Endothelial cell of umbilical vein (primary cell): ENCODE measurements at regions of chr3 and their contacts with region 1.

Region 1: GRCh38 chr3:182713743-182714517 is 79.4 kb upstream of the ATP11B start:
- DNase-seq: peak; percentile 75
- H3K4me3 ChIP-seq: no peak overlapping the region
- H3K27ac ChIP-seq: no peak overlapping the region
- H3K4me1 ChIP-seq: peaks cover 5% of the 10 kb centered on the region
- H3K27me3 ChIP-seq: no peaks in the 10 kb centered on the region
- CTCF ChIP-seq: peak; percentile 40 to 53
- POLR2A ChIP-seq: no peak

Region 2: DNA sequence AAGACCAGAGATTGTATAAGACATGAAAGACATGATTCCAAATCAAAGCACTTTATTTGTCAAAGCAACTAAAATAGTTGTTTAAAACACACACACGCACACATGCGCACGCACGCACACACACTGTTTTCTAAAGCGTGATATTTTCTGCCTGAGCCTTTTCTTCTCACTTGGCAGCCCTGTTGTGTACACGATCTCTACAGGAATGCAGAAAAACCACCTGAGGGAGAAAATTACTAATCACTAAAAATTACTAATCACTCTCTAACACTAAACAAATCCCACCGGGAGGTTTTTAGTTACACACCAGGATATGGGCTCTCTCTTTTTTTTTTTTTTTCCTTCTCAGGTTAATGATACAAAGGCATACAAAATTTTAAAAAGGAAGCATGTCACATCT is 80.7 kb before region 1 on chr3:
- CTCF ChIA-PET with region 1: no interaction called
- POLR2A ChIA-PET with region 1: no interaction called
- dilution Hi-C with region 1: no loop called
- intact Hi-C with region 1: no loop called
- DNase-seq: no peak
- H3K4me3 ChIP-seq: no peak overlapping the region
- H3K27ac ChIP-seq: no peak overlapping the region
- H3K4me1 ChIP-seq: no peaks in the 10 kb centered on the region
- H3K27me3 ChIP-seq: peaks cover 0 to 2% of the 10 kb centered on the region in 2 experiments
- CTCF ChIP-seq: no peak
- POLR2A ChIP-seq: no peak

Region 3: GRCh38 chr3:182792901-182793662 is 79.2 kb after region 1 on chr3 and contains the start of gene ATP11B:
- CTCF ChIA-PET with region 1: interaction called, 47 read pairs
- POLR2A ChIA-PET with region 1: no interaction called
- dilution Hi-C with region 1: no loop called
- intact Hi-C with region 1: loop called (anchors 1 kb)
- DNase-seq: peak; percentile 79
- H3K4me3 ChIP-seq: peak within 1 kb of the TSS; percentile 69 to 90 (median 74)
- H3K27ac ChIP-seq: peak within 1 kb of the TSS; percentile 74
- H3K4me1 ChIP-seq: peaks cover 32% of the 10 kb centered on the region
- H3K27me3 ChIP-seq: no peaks in the 10 kb centered on the region
- CTCF ChIP-seq: no peak
- POLR2A ChIP-seq: peak; percentile 80
- total RNA-seq, gene ATP11B: 49.3 and 62.3 TPM in 2 replicates

Region 4: GRCh38 chr3:182843478-182843877 is 129.5 kb after region 1 on chr3:
- CTCF ChIA-PET with region 1: interaction called, 23 read pairs
- POLR2A ChIA-PET with region 1: no interaction called
- dilution Hi-C with region 1: no loop called
- intact Hi-C with region 1: loop called (anchors 1 kb)
- DNase-seq: peak; percentile 18
- H3K4me3 ChIP-seq: no peak overlapping the region
- H3K27ac ChIP-seq: no peak overlapping the region
- H3K4me1 ChIP-seq: peaks cover 9% of the 10 kb centered on the region
- H3K27me3 ChIP-seq: no peaks in the 10 kb centered on the region
- CTCF ChIP-seq: no peak
- POLR2A ChIP-seq: no peak

Region 5: GRCh38 chr3:182869059-182869458 is 155.1 kb after region 1 on chr3:
- CTCF ChIA-PET with region 1: interaction called, 14 read pairs
- POLR2A ChIA-PET with region 1: no interaction called
- dilution Hi-C with region 1: no loop called
- intact Hi-C with region 1: no loop called
- DNase-seq: no peak
- H3K4me3 ChIP-seq: no peak overlapping the region
- H3K27ac ChIP-seq: no peak overlapping the region
- H3K4me1 ChIP-seq: no peaks in the 10 kb centered on the region
- H3K27me3 ChIP-seq: no peaks in the 10 kb centered on the region
- CTCF ChIP-seq: no peak
- POLR2A ChIP-seq: no peak

Region 6: GRCh38 chr3:183178629-183179549 is 465.0 kb after region 1 on chr3:
- CTCF ChIA-PET with region 1: interaction called, 13 read pairs
- POLR2A ChIA-PET with region 1: no interaction called
- dilution Hi-C with region 1: no loop called
- intact Hi-C with region 1: no loop called
- DNase-seq: peak; percentile 37
- H3K4me3 ChIP-seq: peak overlapping the region; percentile 38 to 78 (median 40)
- H3K27ac ChIP-seq: peak overlapping the region; percentile 7
- H3K4me1 ChIP-seq: peaks cover 5% of the 10 kb centered on the region
- H3K27me3 ChIP-seq: peaks cover 0 to 8% of the 10 kb centered on the region in 2 experiments
- CTCF ChIP-seq: peak; percentile 32 to 42
- POLR2A ChIP-seq: no peak